ENCODE measurements at regions of chr17 and their contacts with region 1.

Region 1: GRCh38 chr17:55717898-55718735 is 4.5 kb downstream of the TMEM100 start:
- DNase-seq: no peak
- ATAC-seq: peak; percentile 71
- H3K4me3 ChIP-seq: no peak overlapping the region
- H3K27ac ChIP-seq: no peak overlapping the region
- H3K4me1 ChIP-seq: no peaks in the 10 kb centered on the region
- H3K27me3 ChIP-seq: no peaks in the 10 kb centered on the region; a peak in 1 of 4 replicates
- CTCF ChIP-seq: peak; percentile 65 to 74 (median 66); a peak in 5 of 6 replicates
- EP300 ChIP-seq: no peak
- POLR2A ChIP-seq: no peak
- RAD21 ChIP-seq: peak; percentile 67

Region 2: GRCh38 chr17:55601874-55602364 is 116.2 kb before region 1 on chr17:
- CTCF ChIA-PET with region 1: interaction called, 15 read pairs
- POLR2A ChIA-PET with region 1: no interaction called
- RAD21 ChIA-PET with region 1: interaction called, 3 read pairs
- SMC1A ChIA-PET with region 1: interaction called, 3 read pairs
- in situ Hi-C with region 1: no loop called
- intact Hi-C with region 1: no loop called
- DNase-seq: no peak
- ATAC-seq: peak; percentile 69
- H3K4me3 ChIP-seq: no peak overlapping the region
- H3K27ac ChIP-seq: no peak overlapping the region
- H3K4me1 ChIP-seq: no peaks in the 10 kb centered on the region
- H3K27me3 ChIP-seq: no peaks in the 10 kb centered on the region
- CTCF ChIP-seq: peak; percentile 71 to 77 (median 75)
- EP300 ChIP-seq: no peak
- POLR2A ChIP-seq: no peak
- RAD21 ChIP-seq: peak; percentile 82

Region 3: GRCh38 chr17:55641676-55642081 is 76.4 kb before region 1 on chr17:
- CTCF ChIA-PET with region 1: interaction called, 11 read pairs
- POLR2A ChIA-PET with region 1: no interaction called
- RAD21 ChIA-PET with region 1: no interaction called
- SMC1A ChIA-PET with region 1: no interaction called
- in situ Hi-C with region 1: no loop called
- intact Hi-C with region 1: no loop called
- DNase-seq: no peak
- ATAC-seq: peak; percentile 74
- H3K4me3 ChIP-seq: no peak overlapping the region
- H3K27ac ChIP-seq: no peak overlapping the region
- H3K4me1 ChIP-seq: no peaks in the 10 kb centered on the region
- H3K27me3 ChIP-seq: no peaks in the 10 kb centered on the region; a peak in 1 of 4 replicates
- CTCF ChIP-seq: peak; percentile 59 to 70 (median 68)
- EP300 ChIP-seq: no peak
- POLR2A ChIP-seq: no peak
- RAD21 ChIP-seq: peak; percentile 50

Region 4: GRCh38 chr17:55706808-55707807 is 11.0 kb before region 1 on chr17:
- CTCF ChIA-PET with region 1: interaction called, 16 read pairs
- POLR2A ChIA-PET with region 1: no interaction called
- RAD21 ChIA-PET with region 1: no interaction called
- SMC1A ChIA-PET with region 1: interaction called, 4 read pairs
- in situ Hi-C with region 1: no loop called
- intact Hi-C with region 1: no loop called
- DNase-seq: no peak
- ATAC-seq: no peak
- H3K4me3 ChIP-seq: no peak overlapping the region
- H3K27ac ChIP-seq: no peak overlapping the region
- H3K4me1 ChIP-seq: no peaks in the 10 kb centered on the region
- H3K27me3 ChIP-seq: no peaks in the 10 kb centered on the region
- CTCF ChIP-seq: no peak
- EP300 ChIP-seq: no peak
- POLR2A ChIP-seq: no peak
- RAD21 ChIP-seq: no peak

Region 5: DNA sequence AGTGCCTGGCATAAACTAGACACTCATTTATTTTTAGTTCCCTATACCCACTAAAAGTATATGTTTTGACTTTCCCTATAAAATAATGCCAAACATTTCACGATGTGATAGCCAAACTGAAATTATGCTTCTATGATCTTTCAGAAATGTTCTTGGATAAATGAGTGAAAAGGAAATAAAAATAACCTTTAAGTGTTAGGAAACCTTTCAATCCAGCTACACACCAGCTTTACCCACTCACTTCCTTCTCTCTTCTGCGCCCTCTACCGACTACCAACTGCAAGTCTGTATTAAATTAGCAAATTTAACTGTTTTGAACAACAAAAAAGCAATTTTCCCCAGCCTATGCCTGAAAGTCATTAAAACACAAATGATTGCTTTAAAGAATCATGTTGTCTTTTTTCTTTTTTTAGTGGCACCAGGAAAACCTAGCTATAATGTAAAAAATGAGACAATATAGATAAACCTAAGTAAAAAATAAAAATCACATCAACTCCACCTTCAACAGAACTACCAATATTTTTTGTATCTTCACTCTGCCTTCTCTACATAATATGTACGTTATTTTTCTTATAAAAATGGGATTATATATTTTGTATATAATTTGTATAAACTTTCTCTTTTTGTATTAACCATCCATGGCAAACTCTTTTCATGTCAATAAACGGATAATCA is 17.8 kb after region 1 on chr17:
- CTCF ChIA-PET with region 1: interaction called, 30 read pairs
- POLR2A ChIA-PET with region 1: no interaction called
- RAD21 ChIA-PET with region 1: no interaction called
- SMC1A ChIA-PET with region 1: interaction called, 8 read pairs
- in situ Hi-C with region 1: no loop called
- intact Hi-C with region 1: no loop called
- DNase-seq: no peak
- ATAC-seq: peak; percentile 69
- H3K4me3 ChIP-seq: no peak overlapping the region
- H3K27ac ChIP-seq: no peak overlapping the region
- H3K4me1 ChIP-seq: no peaks in the 10 kb centered on the region; the same call in 1 of the 2 replicates
- H3K27me3 ChIP-seq: no peaks in the 10 kb centered on the region; a peak in 1 of 4 replicates
- CTCF ChIP-seq: peak; percentile 59 to 67 (median 63)
- EP300 ChIP-seq: no peak
- POLR2A ChIP-seq: no peak
- RAD21 ChIP-seq: peak; percentile 35

Region 6: DNA sequence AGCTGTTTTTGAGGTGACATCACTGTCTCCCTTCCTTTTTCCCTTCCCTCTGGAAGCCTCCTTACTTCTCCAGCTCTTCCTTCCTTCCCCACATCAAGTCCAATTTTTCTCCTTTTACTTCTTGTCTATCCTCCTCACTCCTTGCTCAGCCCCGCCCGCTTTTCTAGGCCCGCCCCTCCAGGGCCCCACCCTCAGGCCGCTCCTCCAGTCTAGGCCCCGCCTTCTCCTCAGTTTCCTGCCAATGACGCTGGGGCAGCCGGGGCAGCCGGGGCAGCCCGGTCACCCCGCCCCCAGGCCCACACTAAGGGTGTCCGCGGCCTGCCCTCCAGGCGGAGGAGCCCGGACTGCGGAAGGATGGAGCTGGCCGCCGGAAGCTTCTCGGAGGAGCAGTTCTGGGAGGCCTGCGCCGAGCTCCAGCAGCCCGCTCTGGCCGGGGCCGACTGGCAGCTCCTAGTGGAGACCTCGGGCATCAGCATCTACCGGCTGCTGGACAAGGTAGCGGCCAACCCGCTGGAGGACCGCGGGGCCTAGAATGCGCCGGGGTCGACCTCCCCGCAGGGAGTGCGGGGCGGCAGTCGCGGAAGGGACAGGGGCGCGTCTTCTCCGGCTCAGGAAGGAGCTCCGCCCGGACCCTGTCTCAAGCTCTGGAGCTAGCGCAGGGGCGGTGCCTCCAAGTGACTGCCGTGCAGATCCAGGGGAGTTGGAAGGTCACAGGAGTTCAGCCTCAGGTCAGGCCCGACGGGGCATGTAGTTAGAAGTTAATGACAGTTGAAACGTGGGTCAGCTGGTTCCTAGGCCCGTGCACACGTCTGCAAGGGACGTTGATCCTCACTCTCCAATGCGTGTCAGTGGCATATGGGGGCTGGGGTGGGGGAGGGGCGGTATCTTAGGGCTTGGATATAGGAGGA is 32.9 kb after region 1 on chr17 and contains the start of gene PCTP:
- CTCF ChIA-PET with region 1: interaction called, 3 read pairs
- POLR2A ChIA-PET with region 1: no interaction called
- RAD21 ChIA-PET with region 1: no interaction called
- SMC1A ChIA-PET with region 1: interaction called, 3 read pairs
- in situ Hi-C with region 1: loop called (anchors 5 kb)
- intact Hi-C with region 1: no loop called
- DNase-seq: peak; percentile 36
- ATAC-seq: peak; percentile 100
- H3K4me3 ChIP-seq: peak within 1 kb of the TSS; percentile 77
- H3K27ac ChIP-seq: peak within 1 kb of the TSS; percentile 22; the same call in 1 of the 2 replicates
- H3K4me1 ChIP-seq: peaks cover 4% of the 10 kb centered on the region; the same call in 1 of the 2 replicates
- H3K27me3 ChIP-seq: no peaks in the 10 kb centered on the region
- CTCF ChIP-seq: peak; percentile 17 to 55 (median 41); a peak in 5 of 6 replicates
- EP300 ChIP-seq: no peak
- POLR2A ChIP-seq: peak; percentile 77
- RAD21 ChIP-seq: no peak
- polyA plus RNA-seq, gene PCTP: 1.4 to 2.5 TPM

Region 7: DNA sequence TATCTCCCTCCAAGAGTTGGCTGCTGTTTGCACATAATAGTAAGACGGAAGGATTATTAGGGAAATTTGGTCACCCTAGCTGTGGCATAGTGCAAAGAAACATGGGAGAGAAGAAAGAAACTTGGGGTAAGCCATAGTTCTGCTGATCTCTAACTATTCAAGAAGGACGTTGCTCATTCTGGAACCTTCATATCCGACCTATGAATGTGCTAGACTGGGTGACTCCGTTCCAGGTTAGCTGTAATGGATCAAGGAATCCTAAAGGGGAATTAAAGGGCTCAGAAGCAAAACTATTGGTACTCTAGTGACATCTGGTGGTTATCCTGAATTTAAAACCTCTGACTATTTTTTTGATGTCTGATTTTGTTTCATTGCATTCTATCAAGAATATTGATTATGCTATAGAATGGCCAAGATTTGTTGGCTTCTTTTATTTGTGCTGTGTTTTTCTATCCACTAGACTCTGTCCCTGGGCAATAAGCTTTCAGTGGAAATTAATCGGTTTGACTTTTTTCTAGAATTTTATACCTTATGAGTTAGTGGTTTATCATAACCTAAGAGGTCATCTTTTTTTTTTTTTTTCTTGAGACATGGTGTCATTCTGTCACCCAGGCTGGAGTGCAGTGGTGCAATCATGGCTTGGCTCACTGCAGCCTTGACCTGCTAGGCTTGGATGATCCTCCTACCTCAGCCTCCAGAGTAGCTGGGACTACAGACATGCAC is 52.2 kb after region 1 on chr17:
- CTCF ChIA-PET with region 1: interaction called, 14 read pairs
- POLR2A ChIA-PET with region 1: no interaction called
- RAD21 ChIA-PET with region 1: no interaction called
- SMC1A ChIA-PET with region 1: interaction called, 4 read pairs
- in situ Hi-C with region 1: no loop called
- intact Hi-C with region 1: no loop called
- DNase-seq: no peak
- ATAC-seq: no peak
- H3K4me3 ChIP-seq: no peak overlapping the region
- H3K27ac ChIP-seq: no peak overlapping the region
- H3K4me1 ChIP-seq: no peaks in the 10 kb centered on the region
- H3K27me3 ChIP-seq: no peaks in the 10 kb centered on the region
- CTCF ChIP-seq: peak; percentile 24 to 51 (median 42); a peak in 4 of 6 replicates
- EP300 ChIP-seq: no peak
- POLR2A ChIP-seq: no peak
- RAD21 ChIP-seq: peak; percentile 56; the same call in 1 of the 2 replicates

Region 8: DNA sequence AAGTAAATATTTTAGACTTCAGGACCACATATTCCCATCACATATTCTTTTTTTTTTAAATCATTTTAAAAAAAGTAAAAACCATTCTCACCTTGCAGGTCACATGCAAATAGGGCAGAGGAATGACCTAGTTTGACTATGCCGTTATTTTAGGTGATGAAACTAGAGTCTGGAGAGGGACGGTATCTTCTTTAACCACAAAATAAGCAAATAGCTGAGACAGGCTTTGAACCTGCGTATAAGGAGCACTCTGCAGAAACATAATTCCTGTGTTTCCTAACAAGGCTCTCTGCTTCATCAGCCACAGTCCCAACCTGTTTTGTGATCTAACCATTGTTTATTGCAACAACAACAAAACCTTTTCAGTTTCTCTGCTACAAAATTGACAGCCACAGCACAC is 154.3 kb after region 1 on chr17:
- CTCF ChIA-PET with region 1: no interaction called
- POLR2A ChIA-PET with region 1: no interaction called
- RAD21 ChIA-PET with region 1: no interaction called
- SMC1A ChIA-PET with region 1: no interaction called
- in situ Hi-C with region 1: no loop called
- intact Hi-C with region 1: no loop called
- DNase-seq: no peak
- ATAC-seq: no peak
- H3K4me3 ChIP-seq: no peak overlapping the region
- H3K27ac ChIP-seq: no peak overlapping the region
- H3K4me1 ChIP-seq: no peaks in the 10 kb centered on the region
- H3K27me3 ChIP-seq: no peaks in the 10 kb centered on the region
- CTCF ChIP-seq: no peak
- EP300 ChIP-seq: no peak
- POLR2A ChIP-seq: no peak
- RAD21 ChIP-seq: no peak

Measured in GM12878 (cell line).